ENCODE measurements at regions of chr2 and their contacts with region 1.

Region 1: GRCh38 chr2:125408874-125409538 is 1247.0 kb upstream of the GYPC start:
- DNase-seq: no peak
- H3K4me3 ChIP-seq: no peak overlapping the region
- H3K4me3 Mint-ChIP-seq: no peak overlapping the region
- H3K27ac Mint-ChIP-seq: no peak overlapping the region
- H3K4me1 ChIP-seq: no peaks in the 10 kb centered on the region
- H3K4me1 Mint-ChIP-seq: no peaks in the 10 kb centered on the region
- H3K27me3 ChIP-seq: no peaks in the 10 kb centered on the region
- H3K27me3 Mint-ChIP-seq: no peaks in the 10 kb centered on the region
- CTCF ChIP-seq: no peak

Region 2: DNA sequence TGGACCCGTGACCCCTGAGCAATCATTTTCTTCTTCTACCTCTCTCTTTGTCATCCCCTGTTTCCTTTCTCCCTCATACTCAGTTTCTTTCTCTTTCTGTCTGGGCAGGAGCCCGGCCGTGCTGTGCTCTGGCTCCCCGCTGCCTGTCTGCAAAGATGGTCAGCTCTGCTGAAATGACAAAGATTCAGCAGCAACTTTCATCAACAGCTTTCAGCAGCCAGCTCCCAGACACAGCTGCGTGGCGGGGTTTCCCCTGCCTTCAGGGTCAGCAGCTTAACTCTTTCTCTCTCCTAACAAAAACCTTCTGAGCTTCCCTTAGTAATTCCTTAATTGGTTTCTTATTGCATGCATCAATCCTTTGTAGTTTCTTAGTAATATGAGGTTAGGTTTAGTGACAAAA is 149.6 kb before region 1 on chr2:
- CTCF ChIA-PET with region 1: no interaction called
- POLR2A ChIA-PET with region 1: no interaction called
- intact Hi-C with region 1: no loop called
- DNase-seq: no peak
- H3K4me3 ChIP-seq: no peak overlapping the region
- H3K4me3 Mint-ChIP-seq: no peak overlapping the region
- H3K27ac Mint-ChIP-seq: no peak overlapping the region
- H3K4me1 ChIP-seq: no peaks in the 10 kb centered on the region
- H3K4me1 Mint-ChIP-seq: no peaks in the 10 kb centered on the region
- H3K27me3 ChIP-seq: no peaks in the 10 kb centered on the region
- H3K27me3 Mint-ChIP-seq: no peaks in the 10 kb centered on the region
- CTCF ChIP-seq: no peak

Region 3: DNA sequence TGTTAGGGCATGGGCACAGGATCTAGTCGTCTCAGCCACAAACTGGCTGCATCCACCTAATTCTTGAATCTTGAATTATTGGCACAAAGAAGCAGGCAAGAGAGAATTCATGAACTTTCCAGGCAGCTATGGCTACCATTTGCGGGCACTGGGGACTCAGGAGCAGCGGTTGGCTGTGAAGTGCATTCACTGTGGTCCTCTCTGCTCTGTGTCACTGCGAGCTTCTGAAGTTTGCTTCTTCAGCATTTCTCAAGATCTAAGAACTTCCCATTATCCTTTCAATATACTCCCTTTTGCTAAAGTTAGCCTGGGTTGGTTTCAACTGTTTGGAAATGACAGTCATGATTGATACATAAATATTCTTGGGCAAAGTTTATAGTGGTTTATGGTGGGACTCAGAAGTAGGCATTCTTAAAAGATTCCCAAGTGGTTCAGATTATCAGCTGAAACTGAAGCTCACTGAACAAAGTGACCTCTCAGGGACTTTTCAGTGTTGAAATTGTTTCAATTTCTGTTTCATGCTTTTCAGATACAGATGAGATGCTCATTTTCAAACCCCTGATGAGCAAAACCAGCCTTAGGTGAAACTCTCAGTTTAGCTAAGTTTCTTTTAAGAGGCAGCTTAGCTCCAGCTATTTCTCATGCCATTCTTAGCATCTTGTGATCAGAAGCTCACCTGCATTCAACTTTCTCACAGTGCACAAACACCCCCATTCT is 11.3 kb before region 1 on chr2:
- CTCF ChIA-PET with region 1: no interaction called
- POLR2A ChIA-PET with region 1: no interaction called
- intact Hi-C with region 1: loop called (anchors 1 kb)
- DNase-seq: no peak
- H3K4me3 ChIP-seq: no peak overlapping the region
- H3K4me3 Mint-ChIP-seq: no peak overlapping the region
- H3K27ac Mint-ChIP-seq: no peak overlapping the region
- H3K4me1 ChIP-seq: no peaks in the 10 kb centered on the region
- H3K4me1 Mint-ChIP-seq: no peaks in the 10 kb centered on the region
- H3K27me3 ChIP-seq: no peaks in the 10 kb centered on the region
- H3K27me3 Mint-ChIP-seq: peaks cover 3% of the 10 kb centered on the region
- CTCF ChIP-seq: no peak